K562 (cell line): ENCODE measurements at regions of chr1 and their contacts with region 1.

Region 1: GRCh38 chr1:15885701-15886610 is 38.4 kb downstream of the SPEN start:
- DNase-seq: peak; percentile 85 to 97 (median 91)
- ATAC-seq: peak; percentile 97
- H3K4me3 ChIP-seq: peak overlapping the region; percentile 24
- H3K27ac ChIP-seq: peak overlapping the region; percentile 85
- H3K4me1 ChIP-seq: peaks cover 14 to 23% of the 10 kb centered on the region in 2 experiments; a peak in 4 of 5 replicates
- H3K27me3 ChIP-seq: no peaks in the 10 kb centered on the region
- CTCF ChIP-seq: peak in 2 of 3 experiments; percentile 4 to 36; a peak in 3 of 6 replicates
- EP300 ChIP-seq: peak; percentile 84
- POLR2A ChIP-seq: peak; percentile 70
- RAD21 ChIP-seq: 0 out of 4 replicates have a peak, but pooled peaks of 1 of the 2 experiments have one; percentile 6

Region 2: GRCh38 chr1:15760520-15761211 is 125.3 kb before region 1 on chr1:
- CTCF ChIA-PET with region 1: no interaction called
- POLR2A ChIA-PET with region 1: no interaction called
- in situ Hi-C with region 1: no loop called
- intact Hi-C with region 1: no loop called
- DNase-seq: peak in 1 of 4 experiments; percentile 38
- ATAC-seq: no peak
- H3K4me3 ChIP-seq: no peak overlapping the region
- H3K27ac ChIP-seq: no peak overlapping the region
- H3K4me1 ChIP-seq: peaks cover 15 to 52% of the 10 kb centered on the region in 2 experiments; a peak in 4 of 5 replicates
- H3K27me3 ChIP-seq: peaks cover 28 to 75% of the 10 kb centered on the region in 2 experiments; a peak in 4 of 5 replicates
- CTCF ChIP-seq: no peak
- EP300 ChIP-seq: no peak
- POLR2A ChIP-seq: no peak
- RAD21 ChIP-seq: no peak

Region 3: GRCh38 chr1:15866721-15867201 is 19.2 kb before region 1 on chr1:
- CTCF ChIA-PET with region 1: no interaction called
- POLR2A ChIA-PET with region 1: interaction called, 40 read pairs
- in situ Hi-C with region 1: no loop called
- intact Hi-C with region 1: no loop called
- DNase-seq: no peak
- ATAC-seq: no peak
- H3K4me3 ChIP-seq: no peak overlapping the region
- H3K27ac ChIP-seq: no peak overlapping the region
- H3K4me1 ChIP-seq: 0 out of 5 replicates have a peak, but pooled peaks cover 0 to 2% of the 10 kb centered on the region in 2 experiments
- H3K27me3 ChIP-seq: no peaks in the 10 kb centered on the region
- CTCF ChIP-seq: no peak
- EP300 ChIP-seq: no peak
- POLR2A ChIP-seq: no peak
- RAD21 ChIP-seq: no peak